ENCODE measurements at regions of chr6 and their contacts with region 1.

Region 1: DNA sequence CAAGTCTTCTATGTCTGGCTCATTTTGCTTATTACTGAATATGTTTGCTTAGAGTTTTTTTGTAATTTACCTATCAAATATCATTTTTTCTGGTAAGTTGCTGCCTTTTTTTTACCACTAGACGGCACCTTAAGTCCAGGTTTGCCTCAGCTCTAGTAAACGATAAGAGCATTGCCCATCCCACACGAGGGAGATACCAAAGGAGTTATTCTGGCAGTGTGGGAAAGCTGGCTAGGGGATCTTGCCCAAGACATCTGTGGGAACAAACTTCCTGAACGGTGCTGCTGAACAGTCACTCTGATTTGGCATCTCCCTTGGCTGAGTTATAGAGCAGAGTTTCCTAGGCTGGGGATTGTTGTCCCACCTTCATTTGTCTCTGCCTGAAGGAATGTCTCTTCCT is 306.4 kb downstream of the COL12A1 start:
- DNase-seq: peak; percentile 17 to 65
- H3K4me3 ChIP-seq: no peak overlapping the region
- H3K27ac ChIP-seq: no peak overlapping the region
- H3K4me1 ChIP-seq: no peaks in the 10 kb centered on the region
- H3K27me3 ChIP-seq: no peaks in the 10 kb centered on the region
- CTCF ChIP-seq: peak; percentile 66

Region 2: DNA sequence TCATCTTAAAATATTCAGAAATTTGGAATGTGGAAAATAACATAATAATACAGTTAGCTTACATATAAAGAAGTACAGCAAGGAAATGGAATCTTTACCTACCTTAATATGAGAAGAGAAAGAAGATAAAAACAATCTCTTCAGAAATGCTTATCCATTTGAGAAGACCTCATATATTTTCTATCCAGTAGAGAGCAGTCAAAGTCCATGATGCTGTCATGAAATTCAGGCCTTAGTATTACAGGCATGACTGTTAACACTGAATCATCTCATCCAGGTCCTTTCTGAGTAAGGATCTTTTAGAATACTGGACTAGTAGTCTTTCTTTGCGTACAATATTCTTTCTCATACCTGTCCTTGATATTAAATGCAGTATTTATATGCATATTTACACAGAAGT is 490.0 kb before region 1 on chr6:
- CTCF ChIA-PET with region 1: no interaction called
- POLR2A ChIA-PET with region 1: no interaction called
- intact Hi-C with region 1: loop called (anchors 10 kb)
- DNase-seq: no peak
- H3K4me3 ChIP-seq: no peak overlapping the region
- H3K27ac ChIP-seq: no peak overlapping the region
- H3K4me1 ChIP-seq: no peaks in the 10 kb centered on the region
- H3K27me3 ChIP-seq: no peaks in the 10 kb centered on the region
- CTCF ChIP-seq: peak; percentile 62

Measured in PC-9 (cell line).